ENCODE measurements at regions of chr2 and their contacts with region 1.

Region 1: GRCh38 chr2:240893363-240893844 is 2.6 kb downstream of the MAB21L4 start:
- DNase-seq: peak; percentile 100
- H3K4me3 ChIP-seq: peak overlapping the region; percentile 77
- H3K27ac ChIP-seq: peak overlapping the region; percentile 83
- H3K4me1 ChIP-seq: peaks cover 86% of the 10 kb centered on the region
- H3K27me3 ChIP-seq: no peaks in the 10 kb centered on the region
- CTCF ChIP-seq: peak; percentile 55; the same call in 1 of the 2 replicates

Region 2: DNA sequence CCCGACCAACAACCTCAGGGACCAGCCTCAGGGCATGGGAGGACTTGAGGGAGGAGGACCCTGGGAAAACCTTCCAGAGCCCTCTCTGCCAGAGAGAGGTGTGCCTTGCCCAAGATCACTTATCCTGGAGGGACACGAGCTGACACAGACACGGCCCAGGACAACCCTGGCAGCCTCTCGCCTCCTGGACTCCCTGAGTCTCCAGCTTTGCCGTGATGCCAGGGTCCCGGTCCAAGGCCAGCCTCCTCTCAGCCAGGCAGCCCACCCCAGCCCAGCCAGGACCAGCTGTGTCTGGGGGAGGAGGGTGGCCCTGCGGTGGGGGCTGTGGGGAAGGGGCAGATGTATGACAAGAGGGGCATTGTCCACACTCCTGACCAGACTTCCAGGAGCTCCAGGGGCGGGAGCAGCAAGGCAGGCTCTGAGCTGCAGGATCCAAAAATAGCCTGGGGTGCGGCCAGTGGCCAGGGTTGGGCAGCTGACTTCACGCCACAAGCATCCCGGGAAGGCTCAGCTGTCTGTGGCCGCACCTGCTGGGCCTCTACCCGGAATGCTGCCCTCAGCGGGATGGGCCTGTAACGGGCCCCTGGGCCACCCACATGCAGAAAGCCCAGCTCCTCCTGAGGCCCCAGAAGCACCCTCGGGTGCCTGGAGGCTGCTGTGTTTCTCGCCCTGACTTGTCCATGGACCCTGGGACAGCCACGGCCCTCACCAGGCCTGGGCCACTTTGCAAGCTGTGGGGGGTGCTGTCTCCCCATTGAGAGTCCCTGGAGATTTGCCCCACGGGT is 523.4 kb before region 1 on chr2:
- CTCF ChIA-PET with region 1: no interaction called
- POLR2A ChIA-PET with region 1: no interaction called
- intact Hi-C with region 1: loop called (anchors 5 kb)
- DNase-seq: peak; percentile 96 to 100
- H3K4me3 ChIP-seq: peak overlapping the region; percentile 36; the same call in 1 of the 2 replicates
- H3K27ac ChIP-seq: peak overlapping the region; percentile 83
- H3K4me1 ChIP-seq: peaks cover 57% of the 10 kb centered on the region
- H3K27me3 ChIP-seq: no peaks in the 10 kb centered on the region
- CTCF ChIP-seq: no peak

Region 3: DNA sequence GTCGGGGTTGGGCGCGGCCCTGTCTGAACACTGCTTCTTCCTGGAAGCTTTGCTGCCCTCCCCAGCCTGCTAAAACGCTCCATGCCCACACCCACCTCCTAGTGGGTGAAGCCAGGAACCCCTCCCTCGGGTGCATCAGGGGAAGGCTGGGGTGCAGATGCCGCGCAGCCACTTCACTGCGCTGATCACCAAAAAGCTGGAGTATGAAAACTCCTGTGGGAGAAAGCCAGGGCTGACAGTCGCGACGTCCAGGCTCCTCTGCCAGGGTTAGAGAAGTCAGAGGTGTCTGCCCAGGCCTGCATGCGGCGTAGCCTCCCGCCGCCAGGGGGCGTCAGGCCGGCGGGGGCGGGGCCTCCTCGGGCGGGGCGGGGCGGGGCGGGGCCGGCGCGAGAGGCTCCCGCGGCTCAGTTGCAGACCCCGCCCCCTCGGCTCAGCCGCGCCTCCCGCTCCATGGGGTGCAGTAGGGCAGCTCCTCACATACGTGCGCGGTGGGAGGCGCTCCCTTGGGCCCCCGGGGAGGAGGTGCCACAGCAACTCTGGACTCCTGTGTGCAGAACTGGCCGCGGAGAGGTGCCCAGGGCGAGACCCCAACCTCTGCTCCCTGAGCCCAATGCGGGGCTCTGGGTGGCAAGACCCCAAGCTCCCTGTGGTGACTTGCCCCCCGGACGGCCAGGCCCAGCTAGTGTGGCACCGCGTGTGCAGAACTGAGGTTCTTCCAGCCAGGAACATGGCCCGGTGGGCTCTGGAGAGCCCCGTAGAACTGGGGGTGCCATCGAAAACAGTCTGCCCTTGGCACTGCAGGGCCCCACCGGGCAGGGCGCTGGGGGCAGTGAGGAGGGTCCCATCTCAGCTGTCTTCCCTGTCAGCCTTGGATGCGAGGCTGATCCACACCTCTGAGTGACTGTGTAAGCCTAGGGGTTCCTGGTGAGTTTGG is 326.9 kb before region 1 on chr2:
- CTCF ChIA-PET with region 1: no interaction called
- POLR2A ChIA-PET with region 1: no interaction called
- intact Hi-C with region 1: loop called (anchors 5 kb)
- DNase-seq: peak; percentile 84 to 99
- H3K4me3 ChIP-seq: peak overlapping the region; percentile 67
- H3K27ac ChIP-seq: peak overlapping the region; percentile 100
- H3K4me1 ChIP-seq: peaks cover 71% of the 10 kb centered on the region
- H3K27me3 ChIP-seq: no peaks in the 10 kb centered on the region
- CTCF ChIP-seq: peak; percentile 90

Region 4: GRCh38 chr2:240906141-240906910 is 12.9 kb after region 1 on chr2 and contains the start of gene CROCC2:
- CTCF ChIA-PET with region 1: interaction called, 3 read pairs
- POLR2A ChIA-PET with region 1: interaction called, 12 read pairs
- intact Hi-C with region 1: no loop called
- DNase-seq: no peak
- H3K4me3 ChIP-seq: no peak within 1 kb of the TSS
- H3K27ac ChIP-seq: no peak within 1 kb of the TSS
- H3K4me1 ChIP-seq: peaks cover 15% of the 10 kb centered on the region
- H3K27me3 ChIP-seq: no peaks in the 10 kb centered on the region
- CTCF ChIP-seq: no peak
- total RNA-seq, gene CROCC2: not detected in 2 replicates

Region 5: GRCh38 chr2:240991373-240992263 is 98.2 kb after region 1 on chr2:
- CTCF ChIA-PET with region 1: interaction called, 3 read pairs
- POLR2A ChIA-PET with region 1: no interaction called
- intact Hi-C with region 1: loop called (anchors 5 kb)
- DNase-seq: peak; percentile 95 to 96
- H3K4me3 ChIP-seq: no peak overlapping the region
- H3K27ac ChIP-seq: peak overlapping the region; percentile 18; the same call in 1 of the 2 replicates
- H3K4me1 ChIP-seq: peaks cover 27% of the 10 kb centered on the region
- H3K27me3 ChIP-seq: no peaks in the 10 kb centered on the region
- CTCF ChIP-seq: no peak

Region 6: DNA sequence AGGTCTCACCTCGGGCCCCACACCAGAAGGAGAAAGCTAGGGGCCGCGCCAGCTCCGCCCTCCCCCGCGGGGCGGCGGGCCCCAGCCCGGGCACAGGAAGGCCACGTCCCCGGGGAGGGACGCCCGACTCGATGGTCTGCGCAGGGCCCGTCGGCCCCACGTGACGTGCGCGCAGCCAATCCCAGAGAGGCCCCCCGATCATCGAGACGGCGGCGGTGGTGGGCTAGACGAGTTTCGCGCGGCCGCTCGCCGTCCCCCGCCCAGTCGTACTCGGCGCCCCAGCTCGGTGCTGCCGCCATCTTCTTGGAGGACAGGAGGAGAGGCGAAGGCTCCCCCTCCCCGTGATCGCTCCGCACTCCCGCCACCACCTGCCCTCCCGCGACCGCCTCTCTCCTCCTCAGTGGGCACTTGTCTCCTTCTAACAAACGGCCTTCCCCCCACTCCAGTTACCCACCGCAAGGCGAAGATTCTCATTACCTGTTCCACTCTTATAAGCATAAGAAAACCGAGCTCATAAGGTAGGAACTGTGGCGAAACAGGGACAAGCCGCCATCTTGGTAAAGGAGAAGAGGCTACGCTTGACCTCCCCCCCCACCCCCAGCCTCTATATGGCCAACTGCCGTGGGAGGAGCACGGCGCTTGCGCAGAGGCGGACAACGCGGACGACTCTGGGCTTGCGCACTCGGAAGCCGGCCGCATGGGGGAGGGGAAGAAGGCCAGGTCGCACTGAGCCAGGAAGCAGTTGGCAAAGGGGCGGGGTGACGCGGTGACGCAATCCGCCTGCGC is 421.9 kb after region 1 on chr2 and contains the start of gene HDLBP:
- CTCF ChIA-PET with region 1: no interaction called
- POLR2A ChIA-PET with region 1: no interaction called
- intact Hi-C with region 1: loop called (anchors 1 kb)
- DNase-seq: peak; percentile 95 to 100
- H3K4me3 ChIP-seq: peak within 1 kb of the TSS; percentile 95
- H3K27ac ChIP-seq: peak within 1 kb of the TSS; percentile 96
- H3K4me1 ChIP-seq: peaks cover 39% of the 10 kb centered on the region
- H3K27me3 ChIP-seq: no peaks in the 10 kb centered on the region
- CTCF ChIP-seq: no peak
- total RNA-seq, gene HDLBP: 715 and 908 TPM in 2 replicates

Measured in PC-9 (cell line).